ENCODE measurements at regions of chr4 and their contacts with region 1.

Region 1: GRCh38 chr4:37879365-37879764 is 11.5 kb upstream of the TBC1D1 start:
- DNase-seq: peak in 2 of 3 donors; percentile 24 to 38
- H3K4me3 ChIP-seq: no peak overlapping the region
- H3K27ac ChIP-seq: no peak overlapping the region
- H3K4me1 ChIP-seq: peaks cover 0 to 2% (median 0%) of the 10 kb centered on the region in 4 experiments
- H3K27me3 ChIP-seq: no peaks in the 10 kb centered on the region

Region 2: GRCh38 chr4:37847311-37847884 is 32.0 kb before region 1 on chr4:
- CTCF ChIA-PET with region 1: no interaction called
- POLR2A ChIA-PET with region 1: no interaction called
- DNase-seq: no peak
- H3K4me3 ChIP-seq: no peak overlapping the region
- H3K27ac ChIP-seq: no peak overlapping the region
- H3K4me1 ChIP-seq: no peaks in the 10 kb centered on the region
- H3K27me3 ChIP-seq: no peaks in the 10 kb centered on the region

Region 3: DNA sequence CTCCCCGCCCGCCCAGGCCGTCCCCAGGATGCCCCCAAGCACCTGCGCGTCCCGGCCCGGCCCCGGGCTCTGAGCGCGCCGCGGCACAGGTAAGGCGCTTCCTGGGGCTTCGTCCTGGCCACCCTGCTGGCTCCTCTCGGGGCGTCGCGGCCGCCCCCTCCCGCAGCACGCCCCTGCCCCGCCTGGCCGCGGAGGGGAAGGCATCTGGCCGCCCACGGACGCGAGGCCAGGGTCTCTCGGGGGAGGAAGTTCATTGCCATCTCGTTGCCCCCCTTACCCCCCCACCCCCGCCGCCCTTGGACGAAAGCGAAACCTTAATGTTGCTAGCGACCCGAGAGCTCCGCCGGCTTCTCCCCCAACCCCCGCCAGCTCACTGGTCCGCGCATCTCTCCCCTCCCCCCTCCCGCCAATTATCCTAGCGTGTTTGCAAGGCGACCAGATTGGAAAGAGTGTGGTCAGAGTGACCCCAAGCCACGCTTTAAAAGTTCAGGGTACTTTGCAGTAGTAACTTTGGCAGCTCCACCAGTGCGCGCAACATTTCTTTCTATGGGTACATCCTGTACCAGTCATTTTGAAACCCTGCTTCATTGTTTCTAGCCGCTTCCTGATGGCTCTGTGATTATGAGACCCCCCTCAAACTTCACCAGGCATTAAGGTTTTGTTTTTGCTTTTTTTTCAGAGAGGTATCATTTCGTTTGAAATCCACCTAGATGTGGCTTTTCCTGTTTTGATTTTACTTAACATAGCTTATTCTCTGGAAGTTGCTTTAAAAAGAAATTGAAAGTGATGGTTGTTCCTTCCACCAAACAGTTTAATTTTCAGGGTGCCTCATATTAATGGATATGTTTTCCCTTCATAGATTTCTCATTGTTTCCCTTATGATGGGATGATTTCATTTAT is 12.1 kb after region 1 on chr4:
- CTCF ChIA-PET with region 1: interaction called, 33 read pairs
- POLR2A ChIA-PET with region 1: no interaction called
- DNase-seq: peak; percentile 56 to 88 (median 82)
- H3K4me3 ChIP-seq: peak overlapping the region; percentile 53 to 96 (median 79)
- H3K27ac ChIP-seq: peak overlapping the region in 1 of 2 experiments; percentile 60
- H3K4me1 ChIP-seq: peaks cover 4 to 20% (median 19%) of the 10 kb centered on the region in 4 experiments
- H3K27me3 ChIP-seq: peaks cover 0 to 6% (median 0%) of the 10 kb centered on the region in 5 experiments

Measured in common myeloid progenitor, CD34-positive (primary cell).